ENCODE measurements at regions of chr6 and their contacts with region 1.

Region 1: GRCh38 chr6:105402939-105403935 is at the start of gene PREP:
- DNase-seq: peak; percentile 83 to 90 (median 86)
- ATAC-seq: peak; percentile 94
- H3K4me3 ChIP-seq: peak within 1 kb of the TSS; percentile 82
- H3K27ac ChIP-seq: peak within 1 kb of the TSS; percentile 80
- H3K4me1 ChIP-seq: peaks cover 16 to 22% of the 10 kb centered on the region in 2 experiments; a peak in 4 of 5 replicates
- H3K27me3 ChIP-seq: no peaks in the 10 kb centered on the region
- CTCF ChIP-seq: peak; percentile 71 to 95 (median 78)
- EP300 ChIP-seq: no peak
- POLR2A ChIP-seq: peak; percentile 59
- RAD21 ChIP-seq: peak; percentile 13 to 47; a peak in 3 of 4 replicates
- polyA plus RNA-seq, gene PREP: 14.1 to 18.6 TPM

Region 2: DNA sequence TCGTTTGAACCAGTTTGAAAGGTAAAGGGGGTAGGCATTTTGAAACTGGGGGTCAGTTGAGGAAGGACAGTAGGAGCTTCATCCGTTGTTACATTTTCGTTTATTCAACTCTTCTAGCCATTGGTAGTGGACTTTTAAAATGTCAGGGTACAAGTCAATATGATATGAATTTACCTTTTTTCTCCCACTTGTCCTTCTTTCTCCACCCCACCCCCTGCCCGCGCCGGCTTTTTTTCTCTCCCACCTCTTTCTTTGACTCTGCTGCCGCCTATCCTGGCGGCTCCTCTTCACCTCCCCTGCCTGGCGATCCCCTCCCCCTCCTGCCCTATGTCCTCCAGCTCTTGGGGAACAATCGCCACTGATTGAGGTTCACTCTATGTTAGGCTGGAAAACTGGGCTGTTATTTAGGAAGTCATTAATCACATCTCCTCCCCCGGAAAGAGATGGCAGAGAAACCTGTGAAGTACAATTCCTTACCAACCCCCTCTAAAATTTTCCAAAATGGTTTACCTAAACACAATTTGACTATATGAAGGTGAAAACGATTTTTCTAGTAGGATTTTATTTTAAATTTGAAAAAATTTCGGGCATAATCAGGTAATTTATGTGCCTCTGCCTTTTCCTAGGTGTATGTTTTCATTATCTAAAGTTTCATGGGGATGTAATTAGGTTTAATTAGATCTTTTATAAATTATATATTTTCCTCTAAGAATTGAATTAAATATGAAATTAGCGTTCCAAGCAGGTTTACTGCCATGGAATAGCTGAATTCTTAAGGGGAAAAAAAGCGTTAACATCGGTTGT is 447.1 kb before region 1 on chr6:
- CTCF ChIA-PET with region 1: no interaction called
- POLR2A ChIA-PET with region 1: no interaction called
- in situ Hi-C with region 1: no loop called
- intact Hi-C with region 1: loop called (anchors 5 kb)
- DNase-seq: peak; percentile 77 to 94 (median 80)
- ATAC-seq: peak; percentile 41
- H3K4me3 ChIP-seq: peak overlapping the region; percentile 56
- H3K27ac ChIP-seq: peak overlapping the region; percentile 98
- H3K4me1 ChIP-seq: peaks cover 6 to 8% of the 10 kb centered on the region in 2 experiments; a peak in 4 of 5 replicates
- H3K27me3 ChIP-seq: no peaks in the 10 kb centered on the region
- CTCF ChIP-seq: peak; percentile 10 to 36 (median 22); a peak in 2 of 6 replicates
- EP300 ChIP-seq: peak; percentile 76
- POLR2A ChIP-seq: peak; percentile 71
- RAD21 ChIP-seq: peak; percentile 22 to 44; a peak in 3 of 4 replicates

Region 3: DNA sequence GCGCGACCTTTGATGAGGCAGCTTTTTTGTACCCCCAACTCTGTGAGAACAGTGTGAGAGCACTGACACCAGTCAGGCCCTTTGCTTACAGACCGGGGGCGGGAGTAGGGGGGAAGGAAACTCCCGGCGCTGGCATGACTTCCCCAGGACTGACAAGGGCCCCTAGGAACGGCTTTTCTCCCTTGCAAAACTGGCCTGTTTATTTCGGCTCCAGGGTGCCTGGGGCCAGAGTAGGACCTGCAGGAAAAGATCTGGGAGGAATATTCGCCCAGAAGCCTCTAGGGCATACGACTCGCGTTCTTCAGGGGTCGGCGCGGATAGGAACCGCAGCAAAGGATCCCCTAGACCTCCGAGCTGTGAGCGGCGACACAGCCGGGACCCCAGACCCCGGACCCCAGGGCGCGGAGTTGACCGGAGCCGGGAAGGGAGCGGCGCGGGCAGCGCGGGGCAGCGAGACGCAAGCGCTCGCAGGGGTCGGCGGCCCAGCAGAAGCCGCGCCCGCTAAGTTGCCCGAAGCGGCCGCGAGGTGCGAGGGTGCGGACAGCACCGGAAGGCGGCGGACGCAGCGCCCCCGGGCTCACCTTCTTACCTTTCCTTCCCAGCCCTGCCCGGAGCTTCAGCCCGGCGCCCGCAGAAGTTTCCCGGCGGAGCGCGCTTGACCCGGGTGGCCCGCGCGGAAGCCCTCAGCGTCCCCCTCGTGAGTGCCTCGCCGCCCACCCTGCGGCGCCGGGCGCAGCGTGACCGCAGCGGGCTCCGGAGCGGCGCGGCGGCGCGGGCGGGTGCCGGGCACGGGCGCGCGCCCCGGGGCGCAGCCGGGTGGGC is 223.8 kb before region 1 on chr6 and contains the start of gene POPDC3:
- CTCF ChIA-PET with region 1: no interaction called
- POLR2A ChIA-PET with region 1: no interaction called
- in situ Hi-C with region 1: no loop called
- intact Hi-C with region 1: loop called (anchors 5 kb)
- DNase-seq: peak in 1 of 4 experiments; percentile 14
- ATAC-seq: peak; percentile 11; the same call in 2 of the 3 replicates
- H3K4me3 ChIP-seq: peak within 1 kb of the TSS; percentile 42
- H3K27ac ChIP-seq: peak within 1 kb of the TSS; percentile 62
- H3K4me1 ChIP-seq: peaks cover 3 to 9% of the 10 kb centered on the region in 2 experiments; a peak in 2 of 5 replicates
- H3K27me3 ChIP-seq: no peaks in the 10 kb centered on the region
- CTCF ChIP-seq: no peak
- EP300 ChIP-seq: no peak
- POLR2A ChIP-seq: no peak
- RAD21 ChIP-seq: no peak
- polyA plus RNA-seq, gene POPDC3: 4.0 to 5.4 TPM

Region 4: DNA sequence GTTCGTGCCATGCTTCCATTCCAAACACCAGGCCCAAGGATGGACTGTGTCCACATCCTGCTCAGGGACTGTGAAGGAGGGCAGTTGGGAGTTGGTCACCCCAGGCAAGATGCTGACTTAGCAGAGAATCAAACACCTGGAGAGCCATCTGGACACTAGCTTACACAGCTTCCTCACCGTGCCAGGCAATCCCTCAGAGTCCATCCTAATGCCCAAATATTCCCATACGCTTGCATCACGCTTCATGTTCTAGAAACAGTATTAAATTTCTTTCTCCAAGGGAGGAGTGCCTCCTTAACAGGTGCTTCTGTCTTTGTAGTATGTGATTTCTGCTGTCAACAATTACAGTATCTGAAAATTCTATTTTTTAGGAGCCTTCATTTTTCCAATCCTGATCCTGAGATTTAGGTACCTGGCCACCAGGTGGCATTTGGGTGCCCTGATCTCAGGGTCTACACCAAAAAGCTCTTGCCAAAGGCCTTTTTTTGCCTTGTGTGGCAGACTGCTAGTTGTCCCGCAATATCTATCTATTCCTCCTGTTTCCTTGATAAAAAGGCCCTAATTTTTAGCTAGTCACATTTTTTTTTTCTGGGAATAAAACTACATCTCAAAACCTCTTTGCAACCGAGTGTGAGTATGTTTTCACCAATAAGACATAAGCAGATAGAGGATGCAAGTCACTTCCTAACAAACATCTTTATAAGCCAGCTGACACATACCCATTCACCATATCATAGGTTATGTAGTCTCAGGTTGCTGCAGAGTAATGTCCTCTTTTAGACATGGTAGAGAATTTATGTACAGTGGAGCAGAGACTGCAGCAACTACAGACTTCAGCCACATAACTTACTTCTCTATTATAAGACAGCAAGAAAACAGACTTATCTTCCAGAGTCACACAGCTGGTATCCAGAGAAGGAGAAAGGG is 85.4 kb before region 1 on chr6:
- CTCF ChIA-PET with region 1: no interaction called
- POLR2A ChIA-PET with region 1: interaction called, 3 read pairs
- in situ Hi-C with region 1: no loop called
- intact Hi-C with region 1: loop called (anchors 10 kb)
- DNase-seq: peak in 1 of 4 experiments; percentile 9
- ATAC-seq: no peak
- H3K4me3 ChIP-seq: no peak overlapping the region
- H3K27ac ChIP-seq: no peak overlapping the region
- H3K4me1 ChIP-seq: no peaks in the 10 kb centered on the region
- H3K27me3 ChIP-seq: no peaks in the 10 kb centered on the region
- CTCF ChIP-seq: peak; percentile 24 to 38 (median 33); a peak in 5 of 6 replicates
- EP300 ChIP-seq: no peak
- POLR2A ChIP-seq: no peak
- RAD21 ChIP-seq: no peak